Left ventricle myocardium superior (tissue), 1 donor: ENCODE measurements at regions of chr1 and their contacts with region 1.

Region 1: DNA sequence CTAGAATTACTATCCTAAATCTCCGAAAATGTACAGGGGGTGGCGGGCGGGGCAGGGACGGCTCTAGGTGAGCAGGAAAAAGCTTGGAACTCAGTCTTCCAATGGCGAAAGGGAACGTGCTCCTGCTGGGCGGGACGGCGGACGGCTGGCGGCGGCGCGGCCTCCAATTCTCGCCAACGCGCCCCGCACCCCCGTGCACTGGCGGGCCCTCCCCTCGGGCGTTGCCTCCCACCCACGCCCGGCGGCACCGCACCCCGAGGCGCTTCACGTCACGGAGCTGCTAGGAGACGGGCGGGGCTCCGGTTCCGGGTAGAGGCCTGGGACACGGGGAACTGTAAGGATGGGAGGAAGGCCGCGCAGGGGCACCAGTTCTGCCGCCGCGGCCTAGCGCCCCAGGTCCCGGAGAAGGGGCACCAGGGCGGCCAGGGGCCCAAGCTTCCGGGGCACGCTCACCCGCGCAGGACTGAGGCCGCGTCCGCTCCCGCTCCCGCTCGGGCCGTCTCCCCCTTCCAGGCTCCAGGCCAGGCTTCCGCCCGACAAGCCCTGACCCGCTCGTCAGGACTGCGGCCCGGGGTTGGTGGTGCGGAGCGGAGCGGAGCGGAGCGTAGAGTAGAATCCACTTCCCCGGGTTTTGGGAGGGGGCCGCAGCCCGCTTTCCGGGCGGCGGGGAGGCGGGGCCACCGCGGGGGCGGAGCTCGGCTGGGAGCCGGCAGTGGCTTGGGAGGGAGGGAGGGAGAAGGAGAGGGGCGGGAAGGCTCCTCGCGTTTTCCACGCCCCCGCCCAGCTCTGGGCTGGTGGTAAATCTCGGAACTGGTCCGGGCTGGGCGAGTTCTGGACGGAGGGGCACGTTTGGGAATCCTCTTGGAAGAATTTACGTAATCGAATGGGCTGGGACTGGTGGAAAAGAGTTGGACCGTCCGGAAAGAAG is at the start of gene DDX59:
- DNase-seq: peak; percentile 98
- ATAC-seq: peak; percentile 96
- total RNA-seq, gene DDX59: 12.6 TPM

Region 2: GRCh38 chr1:200496937-200497336 is 172.6 kb before region 1 on chr1:
- intact Hi-C with region 1: no loop called
- DNase-seq: no peak
- ATAC-seq: no peak

Region 3: DNA sequence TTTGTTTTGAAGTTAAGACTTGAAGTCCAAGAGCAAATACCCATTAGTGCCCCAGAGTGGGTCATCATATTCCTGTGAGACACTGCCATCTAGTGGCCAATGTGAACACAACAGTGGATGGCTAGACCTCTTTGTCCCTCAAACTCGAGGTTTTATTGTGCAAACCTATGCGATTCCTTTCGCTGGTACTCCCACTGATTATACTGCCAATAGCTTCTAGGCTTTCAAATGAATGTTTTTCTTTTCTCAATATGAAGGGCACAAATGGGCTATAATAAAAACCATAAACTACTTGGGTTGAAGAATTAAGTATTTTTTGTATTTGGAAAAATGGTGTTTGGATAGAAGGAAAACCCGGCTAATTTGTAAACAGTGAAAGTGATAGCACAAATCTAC is 159.4 kb before region 1 on chr1:
- intact Hi-C with region 1: no loop called
- DNase-seq: no peak
- ATAC-seq: peak; percentile 74

Region 4: GRCh38 chr1:200802865-200803512 is 133.4 kb after region 1 on chr1:
- intact Hi-C with region 1: loop called (anchors 5 kb)
- DNase-seq: peak; percentile 70
- ATAC-seq: peak; percentile 82